Endothelial cell of umbilical vein (primary cell): ENCODE measurements at regions of chr7 and their contacts with region 1.

Region 1: GRCh38 chr7:155252444-155252887 is 45.2 kb upstream of the INSIG1 start:
- DNase-seq: peak; percentile 18
- H3K4me3 ChIP-seq: no peak overlapping the region
- H3K27ac ChIP-seq: no peak overlapping the region
- H3K4me1 ChIP-seq: peaks cover 7% of the 10 kb centered on the region
- H3K27me3 ChIP-seq: no peaks in the 10 kb centered on the region
- CTCF ChIP-seq: no peak
- POLR2A ChIP-seq: no peak

Region 2: GRCh38 chr7:155212301-155213015 is 40.0 kb before region 1 on chr7:
- CTCF ChIA-PET with region 1: no interaction called
- POLR2A ChIA-PET with region 1: no interaction called
- dilution Hi-C with region 1: no loop called
- intact Hi-C with region 1: no loop called
- DNase-seq: no peak
- H3K4me3 ChIP-seq: no peak overlapping the region
- H3K27ac ChIP-seq: peak overlapping the region; percentile 59
- H3K4me1 ChIP-seq: peaks cover 21% of the 10 kb centered on the region
- H3K27me3 ChIP-seq: no peaks in the 10 kb centered on the region
- CTCF ChIP-seq: no peak
- POLR2A ChIP-seq: no peak

Region 3: DNA sequence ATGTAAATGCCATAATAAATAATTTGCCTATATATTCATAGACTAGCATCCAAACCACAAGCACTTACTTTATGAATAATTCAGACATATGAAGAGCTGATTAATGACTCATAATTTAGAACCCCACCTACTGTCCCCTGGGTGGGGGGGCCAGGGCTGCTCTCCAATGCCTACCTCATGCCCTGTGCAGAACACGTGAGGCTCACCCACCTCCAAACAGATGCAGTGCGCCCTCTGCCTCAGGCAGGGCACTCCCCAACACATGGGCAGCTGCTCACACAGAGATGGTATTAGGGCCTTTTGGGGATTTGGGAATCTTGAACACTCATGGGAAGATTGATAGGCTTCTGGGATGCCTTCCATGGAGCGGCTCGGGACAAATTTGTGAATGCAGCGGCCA is 29.9 kb before region 1 on chr7:
- CTCF ChIA-PET with region 1: interaction called, 5 read pairs
- POLR2A ChIA-PET with region 1: no interaction called
- dilution Hi-C with region 1: no loop called
- intact Hi-C with region 1: loop called (anchors 2 kb)
- DNase-seq: no peak
- H3K4me3 ChIP-seq: no peak overlapping the region
- H3K27ac ChIP-seq: no peak overlapping the region
- H3K4me1 ChIP-seq: no peaks in the 10 kb centered on the region
- H3K27me3 ChIP-seq: no peaks in the 10 kb centered on the region
- CTCF ChIP-seq: no peak
- POLR2A ChIP-seq: no peak